Activated T-helper 1 cell treated with anti-CD3 and anti-CD28 coated beads, Interleukin-12 subunit alpha, Interleukin-12 subunit beta, Interleukin-2, Interleukin-4 antibody, amounts not matched to agents 30 ng/mL and 10 ng/mL and 1 ng/mL, durations not matched to agents 14 hours and 24 hours and 36 hours (primary cell): ENCODE measurements at regions of chrX and their contacts with region 1.

Region 1: GRCh38 chrX:2690856-2691542 is at the start of gene CD99:
- DNase-seq: peak; percentile 90
- H3K4me3 Mint-ChIP-seq: peak within 1 kb of the TSS; percentile 99
- H3K27ac Mint-ChIP-seq: peak within 1 kb of the TSS; percentile 99
- H3K4me1 Mint-ChIP-seq: peaks cover 31% of the 10 kb centered on the region
- H3K27me3 Mint-ChIP-seq: peaks cover 5% of the 10 kb centered on the region
- total RNA-seq, gene CD99: 421 and 437 TPM in 2 replicates

Region 2: DNA sequence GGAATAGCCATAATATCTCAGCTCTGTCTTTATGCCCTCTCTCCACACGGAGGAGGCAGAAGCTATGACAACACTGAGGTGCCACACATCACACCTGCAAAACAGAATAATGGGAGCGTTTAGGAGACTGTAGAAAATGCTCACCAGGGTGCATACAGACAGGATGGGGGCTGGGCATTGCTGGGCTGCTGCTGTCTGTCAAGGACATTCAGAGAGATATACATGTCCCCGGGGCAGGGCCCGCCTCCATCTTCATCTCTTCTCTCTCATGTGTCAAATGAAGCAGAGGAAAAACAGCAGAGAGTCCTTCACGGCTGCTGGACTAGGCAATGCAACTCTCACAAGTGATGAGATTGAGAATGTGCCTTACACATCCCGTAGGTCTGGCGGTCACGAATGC is 124.9 kb before region 1 on chrX:
- intact Hi-C with region 1: no loop called
- DNase-seq: no peak
- H3K4me3 Mint-ChIP-seq: no peak overlapping the region
- H3K27ac Mint-ChIP-seq: no peak overlapping the region
- H3K4me1 Mint-ChIP-seq: no peaks in the 10 kb centered on the region
- H3K27me3 Mint-ChIP-seq: no peaks in the 10 kb centered on the region

Region 3: DNA sequence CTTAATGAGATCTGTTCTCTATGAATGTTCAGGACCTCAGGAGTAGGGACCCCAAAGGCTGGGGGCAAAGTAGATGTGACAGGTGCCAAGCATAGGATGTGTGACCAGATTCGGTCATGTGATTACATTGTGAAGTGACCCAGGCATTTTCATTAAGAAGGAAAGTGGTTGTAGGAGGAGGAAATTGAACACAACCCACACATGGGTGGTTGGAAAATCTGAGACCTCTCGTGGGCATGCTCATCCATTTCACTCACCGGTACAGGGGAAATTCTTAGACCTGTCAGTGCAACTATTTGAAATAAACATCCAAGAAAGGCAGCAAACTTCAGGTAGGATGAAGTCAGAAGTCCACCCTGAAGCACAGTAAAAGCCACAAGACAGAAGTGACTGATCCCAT is 43.4 kb before region 1 on chrX:
- intact Hi-C with region 1: loop called (anchors 1 kb)
- DNase-seq: no peak
- H3K4me3 Mint-ChIP-seq: peak overlapping the region; percentile 57
- H3K27ac Mint-ChIP-seq: peak overlapping the region; percentile 79
- H3K4me1 Mint-ChIP-seq: peaks cover 25% of the 10 kb centered on the region
- H3K27me3 Mint-ChIP-seq: no peaks in the 10 kb centered on the region

Region 4: GRCh38 chrX:2717312-2717711 is 26.3 kb after region 1 on chrX:
- intact Hi-C with region 1: loop called (anchors 1 kb)
- DNase-seq: no peak
- H3K4me3 Mint-ChIP-seq: peak overlapping the region; percentile 53
- H3K27ac Mint-ChIP-seq: peak overlapping the region; percentile 93
- H3K4me1 Mint-ChIP-seq: peaks cover 38% of the 10 kb centered on the region
- H3K27me3 Mint-ChIP-seq: no peaks in the 10 kb centered on the region

Region 5: GRCh38 chrX:2811271-2811670 is 120.3 kb after region 1 on chrX:
- intact Hi-C with region 1: loop called (anchors 1 kb)
- DNase-seq: no peak
- H3K4me3 Mint-ChIP-seq: no peak overlapping the region
- H3K27ac Mint-ChIP-seq: no peak overlapping the region
- H3K4me1 Mint-ChIP-seq: no peaks in the 10 kb centered on the region
- H3K27me3 Mint-ChIP-seq: no peaks in the 10 kb centered on the region